Heart right ventricle (tissue), 16 donors: ENCODE measurements at regions of chr2 and their contacts with region 1.

Region 1: GRCh38 chr2:215920244-215921100 is 92.9 kb downstream of the MREG start:
- DNase-seq: peak; percentile 32 to 74
- ATAC-seq: peak; percentile 67 to 97 (median 94)
- H3K4me3 ChIP-seq: no peak overlapping the region
- H3K27ac ChIP-seq: no peak overlapping the region
- H3K4me1 ChIP-seq: peaks cover 0 to 29% (median 4%) of the 10 kb centered on the region in 9 donors
- H3K27me3 ChIP-seq: no peaks in the 10 kb centered on the region
- CTCF ChIP-seq: peak; percentile 67 to 92 (median 84)

Region 2: DNA sequence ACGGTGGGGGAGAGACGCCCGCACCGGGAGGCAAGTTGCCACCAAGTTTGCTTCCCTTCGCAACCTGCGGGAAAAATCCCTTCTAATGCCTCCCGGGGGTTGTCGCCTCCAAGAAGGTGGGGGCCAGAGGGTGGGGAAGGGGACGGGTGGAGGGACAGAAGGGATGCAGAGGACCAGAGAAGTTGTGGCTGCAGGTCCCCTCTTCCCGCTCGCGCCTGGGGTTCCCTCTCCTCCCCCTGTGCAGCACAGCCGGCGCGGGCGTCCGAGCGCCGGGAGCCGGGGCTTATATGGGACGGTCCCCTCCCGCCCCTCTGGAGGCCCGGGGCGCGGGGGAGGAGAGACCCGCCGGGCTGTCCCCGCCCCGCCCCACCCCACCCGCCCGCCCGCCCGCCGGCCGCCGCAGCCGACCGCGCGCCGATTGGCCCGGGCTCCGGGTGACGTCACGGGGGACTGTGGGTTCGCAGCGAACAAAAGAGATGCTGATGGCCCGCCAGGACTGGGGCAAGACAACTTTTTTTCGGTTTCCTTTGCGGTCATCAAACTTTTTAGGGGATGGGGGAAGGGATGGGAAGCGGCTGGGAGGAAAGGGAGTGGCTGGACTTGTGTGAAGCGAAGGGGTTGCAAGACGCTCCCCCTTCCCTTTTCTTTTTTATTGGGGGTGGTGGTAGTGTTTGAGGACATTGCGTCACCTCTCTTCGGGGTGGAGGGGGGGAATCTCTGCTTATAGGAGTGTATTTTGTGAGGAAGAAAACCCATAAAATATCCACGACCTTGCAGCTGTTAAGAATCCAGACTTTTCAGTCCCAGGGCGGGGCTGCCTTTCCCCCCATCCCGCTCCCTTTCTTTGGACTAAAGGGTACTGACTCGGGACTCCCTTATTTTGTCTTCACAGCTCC is 484.4 kb before region 1 on chr2 and contains the start of gene FN1:
- intact Hi-C with region 1: loop called in 2 of 10 experiments (anchors 5 kb)
- DNase-seq: peak; percentile 91 to 94
- ATAC-seq: peak; percentile 89 to 95 (median 91)
- H3K4me3 ChIP-seq: peak within 1 kb of the TSS; percentile 42 to 77 (median 64)
- H3K27ac ChIP-seq: peak within 1 kb of the TSS; percentile 85 to 99 (median 90)
- H3K4me1 ChIP-seq: peaks cover 0 to 32% (median 0%) of the 10 kb centered on the region in 9 donors
- H3K27me3 ChIP-seq: peaks cover 0 to 73% (median 4%) of the 10 kb centered on the region in 7 donors
- CTCF ChIP-seq: no peak
- total RNA-seq, gene FN1: 67.8 to 888 (median 136) TPM

Region 3: DNA sequence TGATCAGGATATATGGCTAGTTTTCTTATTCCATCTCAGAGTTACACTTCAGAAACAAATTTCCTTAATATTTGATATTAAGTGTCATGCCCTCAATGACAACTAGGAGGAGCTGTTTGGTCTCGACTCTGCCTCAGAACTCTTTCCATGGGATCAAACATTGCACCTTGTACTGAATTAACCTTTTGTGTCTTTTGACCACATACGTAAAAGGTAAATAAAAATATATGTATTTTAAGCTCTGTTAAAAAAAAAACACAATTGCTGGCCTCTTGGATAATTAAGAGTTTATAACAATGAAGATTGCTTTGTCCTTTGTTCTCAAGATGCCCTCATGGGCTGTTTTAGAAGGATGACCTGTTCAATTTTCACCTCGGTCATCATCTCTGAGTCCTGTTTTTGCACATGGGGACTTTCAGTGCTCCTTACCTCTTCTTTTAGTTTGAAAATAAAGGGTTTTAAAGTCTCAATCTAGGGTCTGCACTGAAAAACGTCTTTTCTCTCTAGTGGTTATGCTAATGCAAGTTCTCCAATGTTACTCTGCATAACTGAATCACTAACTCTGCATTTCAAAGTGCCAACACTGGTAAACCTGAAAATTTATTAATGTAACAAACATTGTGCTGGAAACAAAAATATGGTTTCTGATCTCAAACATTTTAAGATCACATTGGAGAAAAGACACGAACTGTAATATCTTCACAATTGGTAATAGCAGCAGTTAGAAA is 465.8 kb before region 1 on chr2:
- intact Hi-C with region 1: loop called in 8 of 10 experiments (anchors 1 to 5 kb)
- DNase-seq: no peak
- ATAC-seq: no peak
- H3K4me3 ChIP-seq: no peak overlapping the region
- H3K27ac ChIP-seq: no peak overlapping the region
- H3K4me1 ChIP-seq: no peaks in the 10 kb centered on the region
- H3K27me3 ChIP-seq: peaks cover 0 to 5% (median 0%) of the 10 kb centered on the region in 7 donors
- CTCF ChIP-seq: peak; percentile 50 to 87 (median 76)

Region 4: GRCh38 chr2:215793747-215794595 is 126.5 kb before region 1 on chr2:
- intact Hi-C with region 1: loop called in 1 of 10 experiments (anchors 10 kb)
- DNase-seq: peak in 1 of 2 donors; percentile 58
- ATAC-seq: peak; percentile 54 to 88 (median 83)
- H3K4me3 ChIP-seq: no peak overlapping the region
- H3K27ac ChIP-seq: peak overlapping the region in 1 of 10 donors; percentile 83
- H3K4me1 ChIP-seq: peaks cover 0 to 40% (median 3%) of the 10 kb centered on the region in 9 donors
- H3K27me3 ChIP-seq: no peaks in the 10 kb centered on the region
- CTCF ChIP-seq: no peak

Region 5: DNA sequence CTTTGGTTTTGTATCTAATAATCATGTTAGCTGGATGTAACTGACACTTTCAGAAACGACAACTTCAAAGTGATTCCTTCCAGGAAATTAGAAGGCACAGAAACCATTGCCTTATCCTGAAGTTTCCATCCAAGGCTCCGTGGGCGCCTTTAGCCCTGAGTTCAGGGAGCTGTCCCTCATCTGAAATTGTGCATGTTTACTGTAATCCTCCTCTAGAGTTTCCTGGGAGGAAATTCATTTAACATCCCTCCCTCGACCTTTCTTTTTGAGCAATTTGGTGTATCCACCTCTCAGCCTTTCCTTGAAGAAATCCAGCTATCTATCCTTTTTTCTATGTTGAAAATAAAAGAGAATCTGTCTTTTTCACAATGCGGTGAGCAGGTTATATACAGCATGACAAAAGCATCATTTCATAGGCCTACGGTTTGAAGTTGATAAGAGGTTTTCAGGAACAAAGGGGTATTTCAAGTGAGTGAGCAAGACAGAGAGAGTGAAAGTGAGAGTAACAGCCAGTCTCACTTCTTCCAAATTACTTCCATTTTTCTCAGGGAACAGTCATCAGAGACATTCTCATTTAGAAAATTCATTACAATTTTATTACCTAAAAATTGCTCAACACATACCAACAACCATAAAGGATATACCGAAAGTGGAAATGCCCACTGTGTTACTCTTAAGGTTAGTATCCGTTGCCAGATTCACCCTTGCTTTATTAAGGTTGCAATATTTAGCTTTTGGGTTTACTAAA is 74.5 kb before region 1 on chr2:
- intact Hi-C with region 1: no loop called
- DNase-seq: no peak
- ATAC-seq: no peak
- H3K4me3 ChIP-seq: no peak overlapping the region
- H3K27ac ChIP-seq: no peak overlapping the region
- H3K4me1 ChIP-seq: peaks cover 0 to 31% (median 13%) of the 10 kb centered on the region in 9 donors
- H3K27me3 ChIP-seq: no peaks in the 10 kb centered on the region
- CTCF ChIP-seq: no peak

Region 6: DNA sequence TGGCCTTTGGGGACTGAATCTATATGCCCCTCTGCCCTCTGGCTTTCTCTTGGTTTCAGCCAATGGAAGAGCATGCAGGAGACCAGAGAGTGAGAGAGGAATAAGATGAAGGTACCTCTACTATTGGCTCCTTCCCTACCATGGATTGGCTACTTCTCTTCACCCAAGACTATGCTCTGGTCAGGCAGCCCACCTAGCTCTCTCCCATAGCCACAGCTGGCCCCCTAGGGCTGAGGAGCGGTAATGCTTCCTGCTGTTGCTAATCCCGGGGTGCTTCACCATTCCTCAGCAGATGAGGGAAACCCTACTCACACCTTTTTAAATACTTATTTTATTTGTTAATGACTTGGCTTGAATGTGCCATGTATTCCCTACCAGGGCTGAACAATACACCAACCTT is 49.5 kb before region 1 on chr2:
- intact Hi-C with region 1: no loop called
- DNase-seq: no peak
- ATAC-seq: peak in 1 of 8 donors; percentile 25
- H3K4me3 ChIP-seq: no peak overlapping the region
- H3K27ac ChIP-seq: peak overlapping the region in 1 of 10 donors; percentile 2
- H3K4me1 ChIP-seq: peaks cover 0 to 11% (median 0%) of the 10 kb centered on the region in 9 donors
- H3K27me3 ChIP-seq: no peaks in the 10 kb centered on the region
- CTCF ChIP-seq: peak in 2 of 9 donors; percentile 19 to 22

Region 7: GRCh38 chr2:216098421-216099334 is 178.2 kb after region 1 on chr2:
- intact Hi-C with region 1: no loop called
- DNase-seq: no peak
- ATAC-seq: no peak
- H3K4me3 ChIP-seq: no peak overlapping the region
- H3K27ac ChIP-seq: no peak overlapping the region
- H3K4me1 ChIP-seq: no peaks in the 10 kb centered on the region
- H3K27me3 ChIP-seq: no peaks in the 10 kb centered on the region
- CTCF ChIP-seq: no peak